Activated naive CD4-positive, alpha-beta T cell treated with anti-CD3 and anti-CD28 coated beads, Interleukin-2, amount 10 ng/mL, durations not matched to agents 7 days and 5 days (primary cell): ENCODE measurements at regions of chr5 and their contacts with region 1.

Region 1: DNA sequence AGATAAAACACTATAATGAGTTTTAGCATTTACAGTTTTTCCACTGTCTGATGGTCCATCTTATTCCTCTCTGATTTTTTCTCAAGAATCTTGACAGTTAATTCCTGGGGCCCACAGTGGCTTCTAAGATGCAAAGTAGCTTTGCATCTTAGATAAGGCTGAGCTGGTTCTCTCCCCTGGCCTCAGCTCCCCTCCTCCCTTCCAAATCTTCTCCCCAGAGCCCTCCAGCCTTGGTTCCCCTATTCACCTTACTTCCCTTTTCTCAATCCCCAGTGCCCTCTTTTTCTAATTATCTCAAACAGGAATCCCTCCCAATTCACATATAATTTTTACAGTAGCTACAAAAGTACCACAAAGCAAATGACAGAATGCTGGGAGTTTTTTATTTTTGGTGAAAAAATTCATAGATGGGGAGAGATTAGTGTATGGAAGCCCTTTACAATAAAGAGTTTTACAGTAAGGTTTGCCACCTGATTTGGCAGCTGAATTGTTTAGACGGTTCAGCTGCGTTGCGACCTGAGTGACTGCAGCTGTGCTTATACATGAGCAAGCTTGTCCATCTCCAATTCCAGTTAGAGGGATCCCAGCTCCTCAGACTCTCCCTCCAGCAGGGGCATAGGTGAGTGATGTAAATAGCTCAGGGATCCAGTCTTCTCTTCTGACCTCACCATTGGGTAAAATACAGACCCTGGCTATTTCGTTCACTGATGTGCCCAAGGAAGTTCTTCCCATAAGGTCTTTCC is 51.4 kb upstream of the CKMT2 start:
- DNase-seq: no peak
- H3K4me3 Mint-ChIP-seq: no peak overlapping the region
- H3K27ac Mint-ChIP-seq: no peak overlapping the region
- H3K4me1 Mint-ChIP-seq: peaks cover 14% of the 10 kb centered on the region
- H3K27me3 Mint-ChIP-seq: no peaks in the 10 kb centered on the region

Region 2: DNA sequence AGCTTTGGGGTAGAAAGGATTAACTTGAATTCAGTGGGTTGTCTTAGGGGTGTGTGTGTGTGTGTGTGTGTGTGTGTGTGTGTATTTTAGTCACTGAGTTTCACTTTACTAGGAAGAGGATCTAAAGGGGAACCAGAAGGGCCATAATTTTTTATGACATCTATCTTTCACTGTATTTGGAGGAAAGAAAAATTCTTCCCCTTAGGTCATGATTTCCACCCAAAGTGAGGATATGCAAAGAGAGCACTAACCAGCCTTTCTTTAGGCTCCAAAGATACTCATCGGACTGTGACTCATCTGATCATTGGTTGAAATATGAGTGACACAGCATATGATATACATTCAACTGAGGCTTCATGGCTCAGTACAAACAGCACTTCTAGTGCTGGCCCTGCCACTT is 296.8 kb before region 1 on chr5:
- CTCF ChIA-PET with region 1: no interaction called
- DNase-seq: no peak
- H3K4me3 Mint-ChIP-seq: no peak overlapping the region
- H3K27ac Mint-ChIP-seq: no peak overlapping the region
- H3K4me1 Mint-ChIP-seq: peaks cover 2% of the 10 kb centered on the region
- H3K27me3 Mint-ChIP-seq: no peaks in the 10 kb centered on the region

Region 3: DNA sequence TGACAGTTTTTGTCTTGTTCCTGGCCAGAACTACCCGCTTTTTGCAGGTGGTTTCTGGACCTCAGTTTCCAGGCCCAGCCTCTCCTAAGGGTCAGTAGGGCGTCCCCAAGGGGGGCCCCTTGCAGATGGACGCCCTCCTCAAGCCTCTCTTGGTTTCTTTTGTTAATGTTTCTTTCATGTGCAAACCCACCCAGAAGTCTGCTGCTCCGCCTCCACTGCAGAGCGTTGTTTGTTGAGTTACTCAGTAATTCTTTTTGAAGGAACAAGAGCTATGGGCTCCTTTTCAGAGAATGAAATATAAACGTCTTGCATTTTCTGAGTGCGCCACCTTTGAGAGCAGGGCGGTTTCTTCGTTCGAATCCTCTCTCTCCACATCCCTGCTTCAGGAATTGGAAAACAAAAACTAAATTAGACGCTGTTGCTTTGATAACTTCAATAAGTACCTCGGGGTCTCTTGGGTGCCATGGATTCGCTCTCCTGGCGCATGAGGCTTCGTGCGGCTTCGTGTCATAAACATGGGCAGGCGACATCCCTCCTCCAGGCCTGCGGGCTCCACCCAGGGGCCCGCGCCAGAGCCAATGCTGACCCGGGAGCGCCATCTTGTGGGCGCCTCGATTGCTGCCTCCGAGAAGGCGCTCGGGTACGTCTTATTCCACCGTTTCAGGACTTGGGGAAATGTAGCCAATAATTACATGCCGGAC is 13.0 kb after region 1 on chr5:
- CTCF ChIA-PET with region 1: interaction called, 10 read pairs
- DNase-seq: peak; percentile 87
- H3K4me3 Mint-ChIP-seq: no peak overlapping the region
- H3K27ac Mint-ChIP-seq: no peak overlapping the region
- H3K4me1 Mint-ChIP-seq: peaks cover 11% of the 10 kb centered on the region
- H3K27me3 Mint-ChIP-seq: peaks cover 4% of the 10 kb centered on the region